ENCODE measurements at regions of chr12 and their contacts with region 1.

Region 1: DNA sequence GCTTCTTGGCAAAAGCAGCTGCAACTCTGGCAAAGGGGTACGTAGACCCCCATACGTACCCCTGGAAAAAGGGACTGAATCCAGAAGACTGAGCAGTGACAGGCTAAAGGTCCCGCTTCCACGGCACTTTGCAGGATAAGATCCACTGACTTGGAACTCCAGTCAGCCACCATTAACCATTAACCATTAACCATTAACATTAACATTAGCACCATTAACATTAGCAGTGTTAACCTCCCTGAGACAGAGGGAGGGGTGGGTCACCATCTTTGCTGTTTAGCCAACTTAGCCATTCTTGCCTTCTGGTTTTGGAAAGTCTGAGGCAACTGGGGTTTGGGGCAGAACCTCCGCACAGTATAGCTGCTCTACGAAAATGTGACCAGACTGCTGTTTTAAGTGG is 187.5 kb downstream of the PAWR start:
- DNase-seq: no peak
- ATAC-seq: no peak
- H3K4me3 ChIP-seq: no peak overlapping the region
- H3K27ac ChIP-seq: no peak overlapping the region
- H3K4me1 ChIP-seq: no peaks in the 10 kb centered on the region
- H3K27me3 ChIP-seq: no peaks in the 10 kb centered on the region
- CTCF ChIP-seq: no peak
- POLR2A ChIP-seq: no peak
- RAD21 ChIP-seq: no peak

Region 2: GRCh38 chr12:79451978-79452377 is 51.3 kb before region 1 on chr12:
- CTCF ChIA-PET with region 1: no interaction called
- POLR2A ChIA-PET with region 1: no interaction called
- dilution Hi-C with region 1: no loop called
- in situ Hi-C with region 1: loop called (anchors 5 kb)
- intact Hi-C with region 1: no loop called
- DNase-seq: peak; percentile 88
- ATAC-seq: peak; percentile 59
- H3K4me3 ChIP-seq: no peak overlapping the region
- H3K27ac ChIP-seq: no peak overlapping the region
- H3K4me1 ChIP-seq: peaks cover 12% of the 10 kb centered on the region
- H3K27me3 ChIP-seq: no peaks in the 10 kb centered on the region
- CTCF ChIP-seq: no peak
- POLR2A ChIP-seq: no peak
- RAD21 ChIP-seq: no peak